ENCODE measurements at regions of chr17 and their contacts with region 1.

Region 1: GRCh38 chr17:48718761-48719641 is 3.3 kb downstream of the PRAC1 start:
- DNase-seq: peak; percentile 34
- ATAC-seq: no peak
- H3K4me3 Mint-ChIP-seq: peak overlapping the region; percentile 38
- H3K27ac Mint-ChIP-seq: peak overlapping the region; percentile 56
- H3K4me1 Mint-ChIP-seq: peaks cover 22% of the 10 kb centered on the region
- H3K27me3 Mint-ChIP-seq: peaks cover 70% of the 10 kb centered on the region
- CTCF ChIP-seq: no peak

Region 2: DNA sequence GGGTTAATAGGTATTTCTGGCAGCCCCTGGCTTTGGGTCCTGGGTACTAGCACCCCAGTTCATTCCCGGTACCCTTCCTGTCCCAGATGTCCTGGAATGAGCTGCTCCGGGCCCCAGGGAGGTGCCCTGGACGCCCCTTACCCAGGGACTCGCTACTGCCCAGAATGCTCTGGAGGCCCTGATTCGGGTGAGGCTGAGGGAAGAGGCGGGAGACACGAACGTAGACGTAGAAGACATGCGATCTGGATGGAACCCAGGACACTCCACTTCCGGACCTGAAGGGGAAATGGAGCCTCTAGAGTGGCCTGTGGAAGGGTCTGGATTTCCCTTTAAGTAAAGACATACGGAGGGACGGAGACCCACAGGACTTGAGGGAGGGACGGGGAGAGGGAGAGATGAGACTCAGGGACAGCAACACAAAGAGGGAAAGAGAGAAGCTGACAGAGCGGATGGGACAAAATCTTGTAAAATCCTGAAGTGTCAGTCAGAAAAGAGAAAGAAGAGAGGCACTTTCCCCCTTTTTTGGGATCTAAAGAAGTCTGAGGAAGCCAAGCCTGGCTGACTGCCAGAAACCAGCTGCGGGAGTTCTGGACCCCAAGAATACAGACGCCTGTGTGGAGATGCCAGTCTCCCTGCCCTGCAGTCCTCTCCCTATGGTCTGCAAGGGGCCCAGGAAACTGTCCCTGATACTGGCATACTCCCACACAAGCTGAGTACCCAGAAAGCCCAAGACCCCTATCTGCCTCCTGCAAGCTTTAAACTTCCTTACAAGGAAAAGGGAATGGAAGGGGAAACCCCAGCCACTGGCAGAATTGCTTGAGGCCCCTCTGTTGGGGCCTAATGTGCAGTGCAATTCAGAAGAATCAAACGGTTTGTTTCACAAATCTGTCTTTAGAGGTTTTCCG is 10.6 kb after region 1 on chr17:
- CTCF ChIA-PET with region 1: no interaction called
- POLR2A ChIA-PET with region 1: no interaction called
- intact Hi-C with region 1: no loop called
- DNase-seq: no peak
- ATAC-seq: no peak
- H3K4me3 Mint-ChIP-seq: no peak overlapping the region
- H3K27ac Mint-ChIP-seq: no peak overlapping the region
- H3K4me1 Mint-ChIP-seq: peaks cover 34% of the 10 kb centered on the region
- H3K27me3 Mint-ChIP-seq: peaks cover 82% of the 10 kb centered on the region
- CTCF ChIP-seq: no peak

Region 3: GRCh38 chr17:48767263-48767774 is 48.3 kb after region 1 on chr17:
- CTCF ChIA-PET with region 1: no interaction called
- POLR2A ChIA-PET with region 1: no interaction called
- intact Hi-C with region 1: no loop called
- DNase-seq: no peak
- ATAC-seq: no peak
- H3K4me3 Mint-ChIP-seq: no peak overlapping the region
- H3K27ac Mint-ChIP-seq: no peak overlapping the region
- H3K4me1 Mint-ChIP-seq: no peaks in the 10 kb centered on the region
- H3K27me3 Mint-ChIP-seq: peaks cover 48% of the 10 kb centered on the region
- CTCF ChIP-seq: no peak

Region 4: DNA sequence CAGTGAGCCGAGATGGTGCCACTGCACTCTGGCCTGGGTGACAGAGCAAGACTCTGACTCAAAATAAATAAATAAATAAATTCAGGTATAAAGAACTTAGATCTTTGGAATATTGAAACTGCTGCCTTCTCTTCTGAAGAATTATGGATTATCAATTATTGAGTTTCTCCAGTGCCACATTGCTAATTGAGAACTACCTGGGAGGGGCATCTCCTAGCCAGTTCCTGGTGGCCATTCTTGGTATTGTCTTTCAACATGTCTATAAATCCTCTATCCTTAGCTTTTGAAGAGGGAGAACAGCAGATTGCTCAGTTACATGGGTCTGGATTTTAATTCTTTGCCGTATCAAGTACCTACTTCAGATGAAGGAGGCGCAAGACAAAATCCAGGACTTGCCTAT is 141.0 kb after region 1 on chr17:
- CTCF ChIA-PET with region 1: interaction called, 3 read pairs
- POLR2A ChIA-PET with region 1: interaction called, 10 read pairs
- intact Hi-C with region 1: no loop called
- DNase-seq: no peak
- ATAC-seq: no peak
- H3K4me3 Mint-ChIP-seq: no peak overlapping the region
- H3K27ac Mint-ChIP-seq: no peak overlapping the region
- H3K4me1 Mint-ChIP-seq: no peaks in the 10 kb centered on the region
- H3K27me3 Mint-ChIP-seq: no peaks in the 10 kb centered on the region
- CTCF ChIP-seq: no peak